GM12878 (cell line): ENCODE measurements at regions of chr12 and their contacts with region 1.

Region 1: DNA sequence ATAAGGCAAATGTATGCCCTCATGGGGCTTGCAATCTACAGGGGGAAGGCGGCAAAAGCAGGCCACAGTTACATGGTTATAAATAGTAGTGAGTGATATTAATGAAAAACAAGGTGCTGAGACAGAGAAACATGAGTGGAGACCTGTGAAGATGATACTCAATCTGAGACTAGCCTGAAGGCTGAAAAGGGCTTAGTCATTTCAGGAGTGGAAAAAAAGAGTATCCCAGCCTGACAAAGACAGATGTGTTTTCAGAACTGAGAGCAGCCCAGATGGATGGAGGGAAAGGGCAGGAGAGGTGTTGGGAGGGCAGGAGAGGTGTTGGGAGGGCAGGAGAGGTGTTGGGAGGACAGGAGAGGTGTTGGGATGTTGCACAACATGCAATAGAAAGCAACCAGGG is 181.9 kb downstream of the C12orf42 start:
- DNase-seq: peak; percentile 26
- ATAC-seq: peak; percentile 76
- H3K4me3 ChIP-seq: no peak overlapping the region
- H3K27ac ChIP-seq: no peak overlapping the region
- H3K4me1 ChIP-seq: 0 out of 2 replicates have a peak, but pooled peaks cover 5% of the 10 kb centered on the region
- H3K27me3 ChIP-seq: no peaks in the 10 kb centered on the region
- CTCF ChIP-seq: no peak
- EP300 ChIP-seq: peak in 1 of 2 experiments; percentile 45; a peak in 2 of 4 replicates
- POLR2A ChIP-seq: no peak
- RAD21 ChIP-seq: no peak

Region 2: GRCh38 chr12:103269946-103270345 is 43.9 kb before region 1 on chr12:
- CTCF ChIA-PET with region 1: no interaction called
- POLR2A ChIA-PET with region 1: no interaction called
- RAD21 ChIA-PET with region 1: interaction called, 4 read pairs
- SMC1A ChIA-PET with region 1: interaction called, 11 read pairs
- in situ Hi-C with region 1: no loop called
- intact Hi-C with region 1: no loop called
- DNase-seq: no peak
- ATAC-seq: 0 out of 3 replicates have a peak, but pooled peaks have one; percentile 6
- H3K4me3 ChIP-seq: no peak overlapping the region
- H3K27ac ChIP-seq: no peak overlapping the region
- H3K4me1 ChIP-seq: no peaks in the 10 kb centered on the region
- H3K27me3 ChIP-seq: no peaks in the 10 kb centered on the region
- CTCF ChIP-seq: no peak
- EP300 ChIP-seq: no peak
- POLR2A ChIP-seq: no peak
- RAD21 ChIP-seq: no peak

Region 3: DNA sequence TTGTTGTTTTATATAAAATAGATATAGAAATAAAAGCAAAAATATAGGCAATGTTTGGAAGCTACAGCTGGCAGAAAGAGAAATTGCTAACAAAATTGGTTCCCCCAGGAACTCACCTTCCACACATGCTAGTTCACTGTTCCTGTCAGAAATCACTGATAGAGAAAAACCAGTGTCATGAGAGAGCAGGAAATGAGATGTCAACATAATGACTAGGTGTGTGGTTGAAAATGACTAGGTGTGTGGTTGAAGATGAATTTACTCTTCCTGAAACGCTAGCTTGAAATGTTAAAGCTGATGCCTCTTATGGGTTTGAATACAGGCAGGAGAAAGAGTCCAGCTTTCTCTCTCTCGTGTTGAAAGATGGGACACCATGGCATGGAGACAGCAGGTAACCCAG is 34.5 kb before region 1 on chr12:
- CTCF ChIA-PET with region 1: interaction called, 4 read pairs
- POLR2A ChIA-PET with region 1: interaction called, 4 read pairs
- RAD21 ChIA-PET with region 1: interaction called, 9 read pairs
- SMC1A ChIA-PET with region 1: interaction called, 17 read pairs
- in situ Hi-C with region 1: no loop called
- intact Hi-C with region 1: no loop called
- DNase-seq: peak; percentile 93
- ATAC-seq: peak; percentile 94
- H3K4me3 ChIP-seq: no peak overlapping the region
- H3K27ac ChIP-seq: peak overlapping the region; percentile 53; the same call in 1 of the 2 replicates
- H3K4me1 ChIP-seq: peaks cover 21% of the 10 kb centered on the region
- H3K27me3 ChIP-seq: no peaks in the 10 kb centered on the region
- CTCF ChIP-seq: no peak
- EP300 ChIP-seq: peak; percentile 83 to 93
- POLR2A ChIP-seq: no peak
- RAD21 ChIP-seq: 0 out of 2 replicates have a peak, but pooled peaks have one; percentile 8

Region 4: DNA sequence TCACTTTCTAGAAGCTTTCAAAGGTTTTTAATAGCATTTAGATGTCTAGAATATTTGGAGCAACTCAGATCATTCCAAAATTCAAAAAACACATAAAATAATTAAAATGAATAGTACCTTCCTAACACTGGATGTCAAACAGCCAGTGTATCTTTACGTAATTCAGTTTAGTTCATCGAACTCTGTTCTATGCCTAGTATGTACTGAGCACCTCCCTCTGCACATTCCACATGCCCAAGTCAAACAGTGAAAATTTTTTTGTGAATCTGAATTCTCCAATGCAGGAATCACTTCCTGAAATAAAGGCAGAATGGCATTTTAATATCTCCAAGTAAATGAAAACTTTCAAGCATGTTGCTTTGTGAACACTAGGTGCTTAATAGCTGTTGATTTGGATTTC is 10.4 kb before region 1 on chr12:
- CTCF ChIA-PET with region 1: interaction called, 3 read pairs
- POLR2A ChIA-PET with region 1: interaction called, 4 read pairs
- RAD21 ChIA-PET with region 1: no interaction called
- SMC1A ChIA-PET with region 1: interaction called, 12 read pairs
- in situ Hi-C with region 1: no loop called
- intact Hi-C with region 1: no loop called
- DNase-seq: no peak
- ATAC-seq: no peak
- H3K4me3 ChIP-seq: no peak overlapping the region
- H3K27ac ChIP-seq: no peak overlapping the region
- H3K4me1 ChIP-seq: no peaks in the 10 kb centered on the region
- H3K27me3 ChIP-seq: no peaks in the 10 kb centered on the region
- CTCF ChIP-seq: no peak
- EP300 ChIP-seq: no peak
- POLR2A ChIP-seq: no peak
- RAD21 ChIP-seq: no peak